ENCODE measurements at regions of chr19 and their contacts with region 1.

Region 1: DNA sequence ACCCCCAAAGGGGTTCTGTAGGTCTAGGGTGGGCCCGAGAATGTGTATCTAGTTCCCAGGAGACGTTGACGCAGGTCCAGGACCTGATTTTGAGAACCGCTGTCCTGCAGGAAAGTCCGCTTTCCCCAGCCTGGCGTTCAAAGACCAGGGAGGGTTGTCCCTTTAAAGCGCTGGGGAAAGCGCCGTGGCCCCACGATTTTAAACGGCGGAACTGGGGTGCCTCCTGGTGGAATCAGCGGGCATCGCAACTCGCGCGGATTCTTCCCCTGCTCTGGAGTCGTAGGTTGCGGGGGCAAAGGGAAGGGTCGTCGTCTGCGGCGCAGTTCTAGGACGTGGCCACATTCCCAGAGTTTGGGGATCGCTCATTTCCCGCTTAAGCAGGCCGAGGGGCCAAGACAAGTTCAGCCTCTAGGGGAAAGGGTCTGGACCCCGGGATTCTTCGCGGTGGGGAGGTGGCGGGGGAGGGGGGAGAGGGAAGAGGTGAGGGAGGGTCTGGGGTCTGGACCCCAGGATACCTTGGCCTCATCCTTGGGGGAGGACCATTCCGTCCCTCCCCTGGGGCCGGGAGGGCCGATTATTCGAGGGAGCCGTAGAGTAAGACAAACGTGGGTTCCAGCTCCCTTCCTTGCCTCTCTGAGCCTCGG is 7.7 kb downstream of the PNMA8B start:
- DNase-seq: peak; percentile 83
- H3K4me3 Mint-ChIP-seq: no peak overlapping the region
- H3K27ac Mint-ChIP-seq: no peak overlapping the region
- H3K4me1 Mint-ChIP-seq: peaks cover 8% of the 10 kb centered on the region
- H3K27me3 Mint-ChIP-seq: peaks cover 62% of the 10 kb centered on the region

Region 2: GRCh38 chr19:46404055-46404752 is 83.7 kb before region 1 on chr19:
- CTCF ChIA-PET with region 1: interaction called, 59 read pairs
- POLR2A ChIA-PET with region 1: no interaction called
- intact Hi-C with region 1: loop called (anchors 1 kb)
- DNase-seq: no peak
- H3K4me3 Mint-ChIP-seq: no peak overlapping the region
- H3K27ac Mint-ChIP-seq: no peak overlapping the region
- H3K4me1 Mint-ChIP-seq: peaks cover 15% of the 10 kb centered on the region
- H3K27me3 Mint-ChIP-seq: peaks cover 56% of the 10 kb centered on the region